ENCODE measurements at regions of chr6 and their contacts with region 1.

Region 1: GRCh38 chr6:42984001-42984923 is at the start of gene PPP2R5D:
- DNase-seq: peak; percentile 88
- ATAC-seq: peak; percentile 95
- H3K4me3 Mint-ChIP-seq: peak within 1 kb of the TSS; percentile 85
- H3K27ac Mint-ChIP-seq: peak within 1 kb of the TSS; percentile 88
- H3K4me1 Mint-ChIP-seq: peaks cover 44% of the 10 kb centered on the region
- H3K27me3 Mint-ChIP-seq: no peaks in the 10 kb centered on the region
- CTCF ChIP-seq: no peak
- total RNA-seq, gene PPP2R5D: 26.7 and 26.8 TPM in 2 replicates

Region 2: GRCh38 chr6:42921801-42922200 is 62.5 kb before region 1 on chr6:
- CTCF ChIA-PET with region 1: no interaction called
- POLR2A ChIA-PET with region 1: interaction called, 10 read pairs
- intact Hi-C with region 1: no loop called
- DNase-seq: no peak
- ATAC-seq: no peak
- H3K4me3 Mint-ChIP-seq: no peak overlapping the region
- H3K27ac Mint-ChIP-seq: no peak overlapping the region
- H3K4me1 Mint-ChIP-seq: peaks cover 18% of the 10 kb centered on the region
- H3K27me3 Mint-ChIP-seq: no peaks in the 10 kb centered on the region
- CTCF ChIP-seq: no peak

Region 3: GRCh38 chr6:43053545-43054205 is 69.4 kb after region 1 on chr6 and contains the start of gene CUL7:
- CTCF ChIA-PET with region 1: no interaction called
- POLR2A ChIA-PET with region 1: interaction called, 13 read pairs
- intact Hi-C with region 1: loop called (anchors 2 kb)
- DNase-seq: peak; percentile 81
- ATAC-seq: peak; percentile 99
- H3K4me3 Mint-ChIP-seq: peak within 1 kb of the TSS; percentile 90
- H3K27ac Mint-ChIP-seq: peak within 1 kb of the TSS; percentile 90
- H3K4me1 Mint-ChIP-seq: peaks cover 37% of the 10 kb centered on the region
- H3K27me3 Mint-ChIP-seq: no peaks in the 10 kb centered on the region
- CTCF ChIP-seq: no peak
- total RNA-seq, gene CUL7: 15.9 and 19.1 TPM in 2 replicates